Right lobe of liver (tissue), 6 donors: ENCODE measurements at regions of chr1 and their contacts with region 1.

Region 1: GRCh38 chr1:100459358-100460114 is 78.4 kb upstream of the GPR88 start:
- DNase-seq: peak; percentile 64 to 78 (median 71)
- ATAC-seq: peak; percentile 79 to 91 (median 88)
- H3K4me3 ChIP-seq: no peak overlapping the region
- H3K27ac ChIP-seq: no peak overlapping the region
- H3K4me1 ChIP-seq: peaks cover 0 to 13% (median 2%) of the 10 kb centered on the region in 4 donors
- H3K27me3 ChIP-seq: no peaks in the 10 kb centered on the region
- CTCF ChIP-seq: peak; percentile 84 to 89 (median 87)
- POLR2A ChIP-seq: no peak

Region 2: GRCh38 chr1:100335436-100335835 is 124.1 kb before region 1 on chr1:
- intact Hi-C with region 1: no loop called
- DNase-seq: no peak
- ATAC-seq: no peak
- H3K4me3 ChIP-seq: no peak overlapping the region
- H3K27ac ChIP-seq: no peak overlapping the region
- H3K4me1 ChIP-seq: no peaks in the 10 kb centered on the region
- H3K27me3 ChIP-seq: no peaks in the 10 kb centered on the region
- CTCF ChIP-seq: no peak
- POLR2A ChIP-seq: no peak

Region 3: GRCh38 chr1:100530880-100531487 is 71.4 kb after region 1 on chr1:
- intact Hi-C with region 1: loop called in 1 of 2 experiments (anchors 10 kb)
- DNase-seq: no peak
- ATAC-seq: peak; percentile 65 to 79 (median 70)
- H3K4me3 ChIP-seq: no peak overlapping the region
- H3K27ac ChIP-seq: no peak overlapping the region
- H3K4me1 ChIP-seq: peaks cover 0 to 10% (median 3%) of the 10 kb centered on the region in 4 donors
- H3K27me3 ChIP-seq: no peaks in the 10 kb centered on the region
- CTCF ChIP-seq: no peak
- POLR2A ChIP-seq: no peak

Region 4: GRCh38 chr1:100606438-100606837 is 146.9 kb after region 1 on chr1:
- intact Hi-C with region 1: loop called in 1 of 2 experiments (anchors 10 kb)
- DNase-seq: peak; percentile 52 to 57 (median 56)
- ATAC-seq: peak; percentile 95 to 99 (median 98)
- H3K4me3 ChIP-seq: no peak overlapping the region
- H3K27ac ChIP-seq: no peak overlapping the region
- H3K4me1 ChIP-seq: no peaks in the 10 kb centered on the region
- H3K27me3 ChIP-seq: no peaks in the 10 kb centered on the region
- CTCF ChIP-seq: peak; percentile 79 to 89 (median 86)
- POLR2A ChIP-seq: no peak

Region 5: GRCh38 chr1:100866041-100866900 is 406.7 kb after region 1 on chr1:
- intact Hi-C with region 1: loop called (anchors 10 kb)
- DNase-seq: no peak
- ATAC-seq: peak; percentile 77 to 85 (median 80)
- H3K4me3 ChIP-seq: no peak overlapping the region
- H3K27ac ChIP-seq: no peak overlapping the region
- H3K4me1 ChIP-seq: no peaks in the 10 kb centered on the region
- H3K27me3 ChIP-seq: no peaks in the 10 kb centered on the region
- CTCF ChIP-seq: peak; percentile 56 to 74 (median 63)
- POLR2A ChIP-seq: no peak

Region 6: GRCh38 chr1:100875228-100875627 is 415.7 kb after region 1 on chr1:
- intact Hi-C with region 1: loop called in 1 of 2 experiments (anchors 10 kb)
- DNase-seq: no peak
- ATAC-seq: no peak
- H3K4me3 ChIP-seq: no peak overlapping the region
- H3K27ac ChIP-seq: no peak overlapping the region
- H3K4me1 ChIP-seq: no peaks in the 10 kb centered on the region
- H3K27me3 ChIP-seq: no peaks in the 10 kb centered on the region
- CTCF ChIP-seq: no peak
- POLR2A ChIP-seq: no peak